Motor neuron (in vitro differentiated cells): ENCODE measurements at regions of chr15 and their contacts with region 1.

Region 1: GRCh38 chr15:55289721-55290527 is at the start of gene RAB27A:
- ATAC-seq: peak; percentile 85 to 92 (median 88)
- H3K4me3 ChIP-seq: peak within 1 kb of the TSS; percentile 31 to 57 (median 50)
- H3K27ac ChIP-seq: no peak within 1 kb of the TSS
- H3K4me1 ChIP-seq: peaks cover 2 to 4% of the 10 kb centered on the region in 2 donors
- total RNA-seq, gene RAB27A: 1.6 to 6.1 (median 3.6) TPM

Region 2: GRCh38 chr15:54803134-54803808 is 486.7 kb before region 1 on chr15:
- in situ Hi-C with region 1: no loop called
- ATAC-seq: peak in 4 of 8 experiments; percentile 77 to 98 (median 85)
- H3K4me3 ChIP-seq: no peak overlapping the region
- H3K27ac ChIP-seq: no peak overlapping the region
- H3K4me1 ChIP-seq: no peaks in the 10 kb centered on the region

Region 3: DNA sequence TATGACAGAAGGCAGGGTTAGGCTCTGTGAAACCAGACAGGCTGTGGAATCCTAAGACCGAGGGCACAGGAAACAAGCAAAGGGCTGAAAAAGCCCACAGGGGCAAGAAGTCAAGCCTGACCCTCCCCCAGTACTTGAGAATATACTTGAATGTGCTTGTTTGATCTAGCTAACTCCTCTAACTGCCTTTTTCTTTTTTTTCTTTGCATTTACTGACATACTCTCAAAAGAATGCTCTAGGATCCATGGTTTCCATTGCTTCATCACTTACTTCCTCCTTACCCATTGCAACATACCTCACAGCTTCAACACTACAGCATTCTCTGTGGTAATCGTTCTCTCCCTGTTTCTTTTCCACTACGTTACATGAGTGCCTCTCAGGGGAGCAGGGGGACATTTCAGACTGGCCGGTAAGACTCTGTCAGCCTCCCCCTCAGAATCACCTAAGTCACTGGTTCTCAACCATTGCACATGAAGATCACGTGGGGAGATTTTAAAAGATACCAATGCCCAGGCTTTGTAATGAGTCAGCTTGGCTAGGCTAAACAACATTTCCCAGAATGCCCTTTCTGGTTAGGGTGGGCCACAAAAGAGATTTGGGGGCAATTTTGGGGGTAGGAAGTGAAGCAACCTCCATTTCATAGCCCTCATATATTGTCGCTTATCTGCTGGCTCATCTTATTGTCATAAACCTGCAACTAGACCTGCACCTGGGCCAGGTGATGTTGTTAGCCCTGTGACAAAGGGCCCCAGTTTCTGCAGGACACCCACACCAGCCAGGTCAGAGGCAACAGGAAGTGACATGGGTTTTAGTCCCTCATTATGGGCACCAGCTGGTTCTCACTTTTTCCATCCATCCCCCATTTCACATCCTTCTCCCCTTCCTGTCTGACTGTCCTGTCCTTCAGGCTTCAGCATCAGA is 68.6 kb before region 1 on chr15:
- in situ Hi-C with region 1: loop called in 1 of 9 experiments (anchors 10 kb)
- ATAC-seq: peak in 4 of 8 experiments; percentile 43 to 87 (median 76)
- H3K4me3 ChIP-seq: no peak overlapping the region
- H3K27ac ChIP-seq: no peak overlapping the region
- H3K4me1 ChIP-seq: peaks cover 0 to 2% of the 10 kb centered on the region in 2 donors

Region 4: DNA sequence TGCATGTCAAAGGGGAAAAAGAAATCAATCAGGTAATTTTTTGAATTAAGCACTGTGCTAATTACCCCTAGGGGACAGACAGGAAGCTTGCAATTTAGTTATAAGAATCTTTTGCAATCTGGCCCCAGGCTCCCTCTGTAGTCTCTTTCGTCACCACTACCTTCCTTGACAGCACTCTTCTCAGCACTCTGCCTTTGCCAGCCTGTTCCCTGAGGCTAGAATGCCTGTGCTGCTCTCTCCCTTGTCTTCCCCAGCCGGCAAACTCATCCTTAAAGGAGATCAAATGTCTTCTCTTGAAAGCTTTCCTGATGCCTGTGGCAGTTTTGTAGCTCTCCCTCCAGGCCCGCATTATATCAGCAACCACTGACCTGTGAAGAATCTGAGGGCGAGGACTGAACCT is 485.4 kb after region 1 on chr15:
- in situ Hi-C with region 1: no loop called
- ATAC-seq: peak in 4 of 8 experiments; percentile 30 to 95 (median 80)
- H3K4me3 ChIP-seq: no peak overlapping the region
- H3K27ac ChIP-seq: no peak overlapping the region
- H3K4me1 ChIP-seq: no peaks in the 10 kb centered on the region